ENCODE measurements at regions of chr16 and their contacts with region 1.

Region 1: DNA sequence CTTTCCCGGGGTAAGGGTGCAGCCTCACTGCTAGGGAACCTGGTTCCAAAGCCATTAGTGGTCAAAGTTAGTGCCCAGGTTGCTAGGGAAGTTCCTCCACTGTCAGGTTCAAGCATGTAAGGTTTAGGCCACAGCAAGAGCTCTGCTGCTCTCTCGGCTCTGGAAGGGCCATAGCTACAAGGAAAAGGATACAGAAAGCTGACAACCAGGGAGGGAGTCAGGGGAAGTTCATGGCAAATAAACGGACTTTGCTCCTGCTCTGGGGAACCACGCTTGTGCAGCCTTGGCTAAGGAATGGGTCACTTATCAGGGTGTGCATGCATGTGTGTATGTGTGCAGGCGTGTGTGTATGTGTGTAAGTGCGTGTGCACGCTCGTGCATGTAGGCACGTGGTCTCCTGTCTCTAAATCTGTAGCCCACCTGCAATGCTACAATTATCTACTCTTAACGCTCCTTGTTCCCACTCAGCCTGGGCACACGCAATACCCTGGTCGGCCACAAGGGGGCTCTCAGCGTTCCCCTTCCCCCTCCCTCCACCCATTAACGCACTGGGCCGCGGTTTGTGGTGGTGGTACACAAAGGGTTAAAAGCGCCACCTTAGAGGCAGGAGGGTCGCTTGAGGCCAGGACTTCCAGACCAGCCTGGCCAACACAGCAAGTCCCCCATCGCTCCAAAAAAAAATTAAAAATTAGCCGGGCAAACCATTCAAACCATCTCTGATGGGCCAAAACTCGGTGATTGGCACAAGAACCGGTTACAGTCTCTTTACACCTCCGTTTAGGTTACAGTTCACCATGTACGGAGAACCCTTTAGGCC is 48.4 kb upstream of the KDM8 start:
- DNase-seq: peak; percentile 56
- ATAC-seq: peak; percentile 94
- H3K4me3 ChIP-seq: peak overlapping the region; percentile 36 to 40
- H3K27ac ChIP-seq: no peak overlapping the region
- H3K4me1 ChIP-seq: peaks cover 0 to 9% of the 10 kb centered on the region in 2 experiments; a peak in 2 of 4 replicates
- H3K27me3 ChIP-seq: no peaks in the 10 kb centered on the region
- CTCF ChIP-seq: peak; percentile 71 to 99 (median 98)
- POLR2A ChIP-seq: no peak
- RAD21 ChIP-seq: peak; percentile 71

Region 2: DNA sequence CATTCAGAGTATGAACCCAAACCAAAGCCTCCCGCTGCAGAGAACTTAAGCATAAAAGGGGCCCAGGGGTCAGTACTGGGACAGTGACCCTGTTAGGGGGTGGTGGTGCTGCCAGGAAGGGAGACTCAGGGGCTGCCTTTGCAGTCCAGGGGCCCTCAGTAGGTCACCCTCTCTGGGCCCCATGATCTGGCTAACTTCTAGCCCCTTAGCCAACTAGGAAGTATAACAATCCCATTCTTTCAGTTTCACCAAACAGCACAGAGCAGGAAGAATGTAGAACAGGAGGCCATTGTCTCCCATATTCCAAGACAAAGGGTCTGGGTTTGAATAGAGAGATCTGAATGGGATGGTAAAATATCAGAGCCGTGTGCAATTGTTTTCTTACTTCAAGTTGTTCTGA is 466.8 kb before region 1 on chr16:
- CTCF ChIA-PET with region 1: no interaction called
- POLR2A ChIA-PET with region 1: no interaction called
- RAD21 ChIA-PET with region 1: no interaction called
- intact Hi-C with region 1: no loop called
- DNase-seq: no peak
- ATAC-seq: no peak
- H3K4me3 ChIP-seq: no peak overlapping the region
- H3K27ac ChIP-seq: no peak overlapping the region
- H3K4me1 ChIP-seq: no peaks in the 10 kb centered on the region
- H3K27me3 ChIP-seq: no peaks in the 10 kb centered on the region
- CTCF ChIP-seq: no peak
- POLR2A ChIP-seq: no peak
- RAD21 ChIP-seq: no peak

Region 3: DNA sequence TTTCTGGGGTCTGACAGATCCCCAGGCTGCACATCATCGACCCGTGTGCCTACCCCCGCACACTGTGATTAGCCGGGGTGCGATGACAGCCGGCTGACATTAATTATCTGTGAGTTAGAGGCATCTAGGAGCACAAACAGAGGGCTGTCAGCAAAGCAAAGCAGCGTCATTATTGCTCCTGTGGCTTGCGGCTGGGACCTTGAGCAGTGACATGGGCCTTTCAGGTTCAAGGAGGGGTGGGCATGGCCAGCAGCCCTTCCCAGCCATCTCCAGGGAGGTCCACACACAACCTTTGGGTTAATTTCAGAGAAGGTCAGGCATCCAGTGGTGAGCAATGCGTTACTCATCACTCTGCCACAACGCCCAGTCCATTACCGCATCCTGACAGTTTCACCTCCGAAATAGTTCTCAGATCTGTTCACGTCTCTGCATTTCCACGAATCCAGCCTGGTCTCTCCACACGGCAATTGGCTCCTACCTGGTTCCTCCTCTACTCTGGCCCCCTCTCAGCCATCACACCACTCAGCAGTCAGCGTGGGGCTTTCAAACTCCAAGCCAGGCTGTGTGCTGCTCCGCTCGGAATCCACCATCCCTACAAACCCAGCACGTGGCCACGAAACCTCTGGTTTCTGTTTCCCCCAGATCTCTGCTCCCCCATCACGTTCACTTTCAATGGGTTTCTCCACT is 337.9 kb before region 1 on chr16:
- CTCF ChIA-PET with region 1: no interaction called
- POLR2A ChIA-PET with region 1: no interaction called
- RAD21 ChIA-PET with region 1: no interaction called
- intact Hi-C with region 1: no loop called
- DNase-seq: no peak
- ATAC-seq: no peak
- H3K4me3 ChIP-seq: no peak overlapping the region
- H3K27ac ChIP-seq: no peak overlapping the region
- H3K4me1 ChIP-seq: peaks cover 0 to 9% of the 10 kb centered on the region in 2 experiments; a peak in 2 of 4 replicates
- H3K27me3 ChIP-seq: 0 out of 2 replicates have a peak, but pooled peaks cover 9% of the 10 kb centered on the region
- CTCF ChIP-seq: no peak
- POLR2A ChIP-seq: no peak
- RAD21 ChIP-seq: no peak

Region 4: GRCh38 chr16:27073682-27074081 is 81.2 kb before region 1 on chr16:
- CTCF ChIA-PET with region 1: no interaction called
- POLR2A ChIA-PET with region 1: no interaction called
- RAD21 ChIA-PET with region 1: no interaction called
- intact Hi-C with region 1: no loop called
- DNase-seq: no peak
- ATAC-seq: no peak
- H3K4me3 ChIP-seq: no peak overlapping the region
- H3K27ac ChIP-seq: no peak overlapping the region
- H3K4me1 ChIP-seq: no peaks in the 10 kb centered on the region
- H3K27me3 ChIP-seq: peaks cover 11% of the 10 kb centered on the region
- CTCF ChIP-seq: no peak
- POLR2A ChIP-seq: no peak
- RAD21 ChIP-seq: no peak

Region 5: DNA sequence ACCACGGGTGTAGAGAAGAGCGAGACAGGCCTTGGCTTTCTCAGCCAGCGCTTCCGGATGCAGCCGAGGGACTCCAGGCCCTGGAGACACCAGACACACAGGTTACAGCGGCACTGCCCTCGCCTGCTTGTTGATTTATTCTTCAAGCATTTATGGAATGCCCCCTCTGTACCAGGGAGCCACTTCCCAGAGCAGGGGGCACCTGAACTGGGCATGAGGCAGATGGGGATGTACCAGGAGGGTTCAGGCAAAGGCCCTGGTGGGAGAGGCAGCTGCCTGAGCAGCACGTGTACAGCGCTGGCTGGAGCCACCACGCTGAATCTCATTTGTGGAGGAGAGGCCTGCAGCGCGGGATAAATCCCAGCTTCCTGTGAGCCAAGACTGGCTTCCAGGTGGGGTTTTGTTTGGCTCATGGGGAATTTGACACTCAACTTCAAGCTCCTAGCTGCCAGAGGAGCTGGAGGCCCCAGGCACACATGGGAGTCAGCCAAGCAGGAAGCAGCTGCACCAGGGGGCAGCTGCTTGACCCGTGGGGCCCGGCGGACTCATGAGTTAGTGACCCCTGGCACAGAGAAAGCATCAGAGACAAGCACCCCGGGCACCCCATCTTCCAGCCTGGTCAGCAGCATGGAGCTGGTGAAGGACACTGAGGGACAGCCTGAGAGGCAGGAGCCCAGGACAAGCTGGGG is 306.7 kb after region 1 on chr16:
- CTCF ChIA-PET with region 1: no interaction called
- POLR2A ChIA-PET with region 1: no interaction called
- RAD21 ChIA-PET with region 1: no interaction called
- intact Hi-C with region 1: loop called (anchors 1 kb)
- DNase-seq: no peak
- ATAC-seq: no peak
- H3K4me3 ChIP-seq: no peak overlapping the region
- H3K27ac ChIP-seq: no peak overlapping the region
- H3K4me1 ChIP-seq: no peaks in the 10 kb centered on the region
- H3K27me3 ChIP-seq: no peaks in the 10 kb centered on the region
- CTCF ChIP-seq: no peak
- POLR2A ChIP-seq: no peak
- RAD21 ChIP-seq: no peak